AG04449 (cell line): ENCODE measurements at regions of chr11 and their contacts with region 1.

Region 1: GRCh38 chr11:19071255-19071654 is 10.7 kb upstream of the MRGPRX2 start:
- DNase-seq: peak; percentile 40
- H3K4me3 ChIP-seq: peak overlapping the region; percentile 44; the same call in 1 of the 2 replicates
- CTCF ChIP-seq: peak; percentile 96

Region 2: DNA sequence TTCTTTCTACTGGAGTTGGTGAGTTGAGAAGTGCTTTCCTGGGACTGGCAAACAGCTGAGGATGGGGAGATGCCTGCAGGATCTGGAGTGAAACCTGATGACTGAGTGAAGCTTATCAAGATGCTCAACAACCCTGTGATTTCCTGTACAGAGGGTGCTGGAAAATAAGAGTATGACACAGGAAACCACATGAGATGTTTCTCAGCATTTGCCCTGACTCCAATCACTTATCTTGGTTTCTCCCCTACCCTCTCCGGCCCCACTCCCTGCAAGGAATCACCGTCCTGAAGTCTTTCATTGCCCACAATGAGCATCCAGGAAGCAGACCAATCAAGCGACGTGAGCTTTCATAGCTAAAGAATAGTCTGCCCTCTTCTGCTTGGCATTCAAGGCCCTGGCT is 10.6 kb before region 1 on chr11 and contains the start of gene MRGPRX2:
- CTCF ChIA-PET with region 1: interaction called, 44 read pairs
- POLR2A ChIA-PET with region 1: no interaction called
- DNase-seq: no peak
- H3K4me3 ChIP-seq: no peak within 1 kb of the TSS
- CTCF ChIP-seq: no peak

Region 3: GRCh38 chr11:19156892-19157291 is 85.6 kb after region 1 on chr11:
- CTCF ChIA-PET with region 1: interaction called, 11 read pairs
- POLR2A ChIA-PET with region 1: no interaction called
- DNase-seq: no peak
- H3K4me3 ChIP-seq: no peak overlapping the region
- CTCF ChIP-seq: no peak

Region 4: DNA sequence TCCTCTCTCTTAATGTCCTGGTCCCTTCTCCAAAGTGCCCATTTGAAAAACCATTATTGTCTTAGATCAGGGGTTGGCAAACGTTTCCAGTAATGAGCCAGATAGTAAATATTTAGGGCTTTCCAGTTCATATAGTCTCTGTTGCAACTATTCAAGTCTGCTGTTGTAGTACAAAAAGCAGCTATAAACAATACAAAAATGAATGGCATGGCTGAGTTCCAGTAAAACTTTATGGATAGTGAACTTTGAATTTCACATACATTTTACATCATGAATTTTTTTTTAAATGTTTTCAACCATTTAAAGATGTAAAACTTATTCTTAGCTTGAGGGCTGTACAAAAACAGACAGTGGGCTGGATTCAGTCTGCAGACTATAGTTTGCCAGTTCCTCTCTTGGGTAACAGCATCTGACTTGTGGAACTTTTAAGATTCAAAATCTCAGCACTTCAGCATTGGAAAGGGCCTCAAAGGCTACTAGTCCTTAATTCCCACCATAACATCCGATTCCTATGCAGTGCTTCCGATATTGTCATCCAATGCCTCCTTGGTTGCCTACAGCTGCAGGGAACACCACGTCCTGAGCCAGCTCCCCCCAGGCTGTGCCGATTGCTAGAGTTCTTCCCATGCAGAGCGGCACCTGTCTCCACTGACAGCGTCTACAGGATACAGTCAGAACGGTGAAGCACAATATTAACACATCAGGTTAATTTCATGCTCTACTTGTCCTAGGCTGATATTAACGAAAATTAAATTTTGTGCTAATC is 235.1 kb after region 1 on chr11:
- CTCF ChIA-PET with region 1: interaction called, 12 read pairs
- POLR2A ChIA-PET with region 1: no interaction called
- DNase-seq: no peak
- H3K4me3 ChIP-seq: no peak overlapping the region
- CTCF ChIP-seq: no peak

Region 5: DNA sequence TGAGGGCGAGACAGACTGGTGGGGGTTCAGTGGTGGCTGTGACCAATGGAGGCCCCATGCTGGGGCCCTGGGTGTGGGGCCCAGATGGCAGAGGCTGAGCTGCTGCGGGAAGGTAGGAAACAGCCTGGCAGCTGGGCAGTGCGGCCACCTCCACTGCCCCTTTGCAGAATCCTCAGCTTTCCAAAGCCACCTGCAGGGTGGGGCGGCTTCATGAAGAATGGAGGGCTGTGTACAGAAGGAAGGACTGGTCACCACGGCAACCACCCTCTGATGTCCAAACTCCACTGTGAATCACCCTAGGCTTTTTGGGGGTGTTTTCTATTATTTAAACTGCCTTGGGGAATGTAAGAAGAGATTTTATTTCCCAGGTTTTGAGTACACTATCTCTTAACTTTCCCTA is 475.1 kb after region 1 on chr11:
- CTCF ChIA-PET with region 1: interaction called, 332 read pairs
- POLR2A ChIA-PET with region 1: no interaction called
- DNase-seq: no peak
- H3K4me3 ChIP-seq: no peak overlapping the region
- CTCF ChIP-seq: no peak